Posterior vena cava (tissue), 2 donors: ENCODE measurements at regions of chr17 and their contacts with region 1.

Region 1: DNA sequence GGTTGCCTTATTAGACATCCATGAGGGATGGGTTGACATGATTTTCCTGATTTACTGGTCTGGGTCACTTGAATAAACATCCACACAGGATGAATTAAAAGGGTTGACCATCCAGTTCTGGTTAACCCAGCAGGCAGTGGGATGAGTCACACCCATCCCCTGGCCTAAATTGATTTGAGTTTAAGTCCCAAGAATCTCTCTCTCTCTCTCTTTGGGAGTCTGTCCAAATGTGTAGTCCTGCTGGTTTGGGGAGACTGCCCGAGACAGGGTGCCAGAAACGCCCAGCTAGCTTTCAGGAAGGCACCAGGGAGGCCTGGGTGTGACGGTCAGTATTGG is 38.8 kb downstream of the SCPEP1 start:
- DNase-seq: no peak

Region 2: DNA sequence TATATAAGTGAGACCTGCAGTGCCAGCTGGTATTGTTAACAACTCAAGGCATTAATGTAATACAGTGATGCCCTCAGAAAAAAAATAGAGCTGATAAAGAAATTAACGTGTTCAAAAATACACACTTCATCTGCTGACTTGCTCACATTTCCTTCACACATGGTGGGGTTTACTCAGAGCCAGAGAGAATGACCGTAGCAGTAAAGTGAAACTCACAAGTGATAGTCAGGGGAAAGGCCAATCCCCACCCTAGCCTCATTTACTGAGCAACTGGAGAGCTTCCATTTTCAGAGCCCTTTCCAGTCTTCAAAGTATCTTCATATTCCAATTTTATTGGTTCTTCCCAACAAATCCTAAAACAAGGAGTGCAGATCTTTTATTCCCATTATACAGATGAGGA is 1826.0 kb before region 1 on chr17:
- intact Hi-C with region 1: loop called in 1 of 2 experiments (anchors 5 kb)
- DNase-seq: no peak

Region 3: GRCh38 chr17:57084802-57085447 is 68.2 kb after region 1 on chr17 and contains the start of gene AKAP1:
- intact Hi-C with region 1: no loop called
- DNase-seq: peak; percentile 98
- total RNA-seq, gene AKAP1: 57.1 to 57.8 TPM

Region 4: GRCh38 chr17:57142925-57143324 is 126.2 kb after region 1 on chr17:
- intact Hi-C with region 1: no loop called
- DNase-seq: no peak

Region 5: GRCh38 chr17:57849874-57850754 is 833.4 kb after region 1 on chr17 and contains the start of gene MRPS23:
- intact Hi-C with region 1: loop called in 1 of 2 experiments (anchors 5 kb)
- DNase-seq: peak; percentile 99
- total RNA-seq, gene MRPS23: 25.2 to 26.5 TPM